ENCODE measurements at regions of chr1 and their contacts with region 1.

Region 1: DNA sequence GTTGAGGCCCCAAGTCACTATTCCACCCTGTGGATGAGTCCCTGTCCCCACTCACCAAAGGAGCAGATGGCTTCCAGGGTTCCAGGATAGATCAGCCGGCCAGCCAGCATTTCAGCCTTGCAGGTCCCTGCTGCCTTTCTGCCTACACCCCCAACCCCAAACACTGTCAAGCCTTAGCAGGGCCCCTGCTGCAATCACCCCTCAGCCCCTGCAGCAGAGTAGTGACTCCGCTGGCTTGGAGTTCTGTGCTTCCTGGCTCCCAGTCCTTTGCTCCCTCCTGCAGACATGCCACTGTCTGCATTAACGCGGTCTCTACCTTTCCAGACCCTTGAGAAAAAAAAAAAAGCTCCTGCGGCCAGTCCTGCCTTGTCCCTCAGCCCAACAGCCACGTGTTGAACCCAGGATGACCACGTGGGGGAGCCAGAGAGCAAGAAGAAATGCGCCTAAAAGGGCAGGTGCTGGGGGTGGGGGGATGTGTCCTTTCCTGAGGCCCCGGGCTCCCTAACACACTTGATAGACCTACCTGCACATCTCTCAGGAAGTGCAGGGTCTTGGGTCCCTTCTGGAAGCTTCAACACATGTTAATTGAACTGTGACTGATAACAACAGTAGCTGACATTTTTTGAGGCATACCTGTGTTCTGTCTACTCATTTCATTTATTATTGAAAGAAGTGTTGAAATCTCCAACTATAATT is 37.4 kb downstream of the RASSF5 start:
- DNase-seq: peak; percentile 90
- ATAC-seq: peak; percentile 80
- H3K4me3 Mint-ChIP-seq: no peak overlapping the region
- H3K27ac Mint-ChIP-seq: peak overlapping the region; percentile 55
- H3K4me1 Mint-ChIP-seq: peaks cover 26% of the 10 kb centered on the region
- H3K27me3 Mint-ChIP-seq: no peaks in the 10 kb centered on the region

Region 2: GRCh38 chr1:206489980-206490770 is 54.5 kb before region 1 on chr1:
- CTCF ChIA-PET with region 1: interaction called, 19 read pairs
- POLR2A ChIA-PET with region 1: no interaction called
- intact Hi-C with region 1: loop called in 1 of 2 experiments (anchors 2 kb)
- DNase-seq: peak; percentile 89
- ATAC-seq: peak; percentile 95
- H3K4me3 Mint-ChIP-seq: no peak overlapping the region
- H3K27ac Mint-ChIP-seq: no peak overlapping the region
- H3K4me1 Mint-ChIP-seq: no peaks in the 10 kb centered on the region
- H3K27me3 Mint-ChIP-seq: no peaks in the 10 kb centered on the region

Region 3: GRCh38 chr1:206556750-206557635 is 12.3 kb after region 1 on chr1:
- CTCF ChIA-PET with region 1: interaction called, 65 read pairs
- POLR2A ChIA-PET with region 1: interaction called, 3 read pairs
- intact Hi-C with region 1: loop called in 1 of 2 experiments (anchors 1 kb)
- DNase-seq: peak; percentile 95
- ATAC-seq: peak; percentile 43
- H3K4me3 Mint-ChIP-seq: peak overlapping the region; percentile 95
- H3K27ac Mint-ChIP-seq: peak overlapping the region; percentile 99
- H3K4me1 Mint-ChIP-seq: peaks cover 66% of the 10 kb centered on the region
- H3K27me3 Mint-ChIP-seq: no peaks in the 10 kb centered on the region

Region 4: DNA sequence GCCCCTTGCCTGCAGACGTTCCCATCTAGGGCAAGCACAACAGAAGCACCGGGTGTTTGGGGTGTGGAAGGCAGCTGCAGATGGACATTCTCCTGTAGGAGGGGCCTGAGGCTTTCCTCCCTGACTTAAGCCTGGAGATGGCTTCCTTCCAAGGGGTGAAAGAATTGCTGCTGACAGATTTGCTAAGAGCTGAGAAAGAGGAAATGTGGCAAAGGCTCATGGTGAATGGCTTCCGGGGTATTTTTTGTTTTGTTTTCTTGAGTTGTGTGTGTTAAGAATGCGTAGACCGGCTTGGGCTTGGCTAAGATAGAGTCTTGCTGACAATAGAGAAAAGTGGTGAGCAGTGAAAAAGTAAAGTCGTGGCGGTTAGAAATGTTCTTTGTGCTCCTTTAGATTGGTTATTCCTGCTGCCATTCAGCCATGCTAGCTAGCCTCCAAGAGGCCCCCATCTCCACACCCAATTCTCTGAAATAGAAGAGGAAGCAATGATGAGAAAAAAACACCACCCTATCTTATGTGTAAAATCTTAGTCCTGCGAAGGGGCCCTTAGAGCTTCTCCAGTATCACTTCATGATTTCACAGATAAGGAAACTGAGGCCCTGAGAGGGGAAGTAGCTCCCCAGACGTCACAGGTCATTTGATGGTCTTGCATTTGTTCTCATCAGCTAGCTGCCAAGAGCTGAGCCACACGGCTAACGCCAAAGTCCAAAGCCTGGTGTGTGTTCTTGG is 30.6 kb after region 1 on chr1:
- CTCF ChIA-PET with region 1: interaction called, 621 read pairs
- POLR2A ChIA-PET with region 1: interaction called, 4 read pairs
- intact Hi-C with region 1: no loop called
- DNase-seq: peak; percentile 53
- ATAC-seq: peak; percentile 13
- H3K4me3 Mint-ChIP-seq: peak overlapping the region; percentile 59
- H3K27ac Mint-ChIP-seq: peak overlapping the region; percentile 99
- H3K4me1 Mint-ChIP-seq: peaks cover 99% of the 10 kb centered on the region
- H3K27me3 Mint-ChIP-seq: no peaks in the 10 kb centered on the region

Region 5: GRCh38 chr1:206612129-206612876 is 67.6 kb after region 1 on chr1 and contains the start of gene EIF2D:
- CTCF ChIA-PET with region 1: interaction called, 9 read pairs
- POLR2A ChIA-PET with region 1: no interaction called
- intact Hi-C with region 1: loop called in 1 of 2 experiments (anchors 1 kb)
- DNase-seq: peak; percentile 98
- ATAC-seq: peak; percentile 87
- H3K4me3 Mint-ChIP-seq: peak within 1 kb of the TSS; percentile 92
- H3K27ac Mint-ChIP-seq: peak within 1 kb of the TSS; percentile 94
- H3K4me1 Mint-ChIP-seq: peaks cover 40% of the 10 kb centered on the region
- H3K27me3 Mint-ChIP-seq: no peaks in the 10 kb centered on the region
- total RNA-seq, gene EIF2D: 91.2 to 100 TPM

Measured in activated CD4-positive, alpha-beta T cell treated with anti-CD3 and anti-CD28 coated beads for 36 hours (primary cell).